Naive thymus-derived CD4-positive, alpha-beta T cell (primary cell): ENCODE measurements at regions of chr1 and their contacts with region 1.

Region 1: DNA sequence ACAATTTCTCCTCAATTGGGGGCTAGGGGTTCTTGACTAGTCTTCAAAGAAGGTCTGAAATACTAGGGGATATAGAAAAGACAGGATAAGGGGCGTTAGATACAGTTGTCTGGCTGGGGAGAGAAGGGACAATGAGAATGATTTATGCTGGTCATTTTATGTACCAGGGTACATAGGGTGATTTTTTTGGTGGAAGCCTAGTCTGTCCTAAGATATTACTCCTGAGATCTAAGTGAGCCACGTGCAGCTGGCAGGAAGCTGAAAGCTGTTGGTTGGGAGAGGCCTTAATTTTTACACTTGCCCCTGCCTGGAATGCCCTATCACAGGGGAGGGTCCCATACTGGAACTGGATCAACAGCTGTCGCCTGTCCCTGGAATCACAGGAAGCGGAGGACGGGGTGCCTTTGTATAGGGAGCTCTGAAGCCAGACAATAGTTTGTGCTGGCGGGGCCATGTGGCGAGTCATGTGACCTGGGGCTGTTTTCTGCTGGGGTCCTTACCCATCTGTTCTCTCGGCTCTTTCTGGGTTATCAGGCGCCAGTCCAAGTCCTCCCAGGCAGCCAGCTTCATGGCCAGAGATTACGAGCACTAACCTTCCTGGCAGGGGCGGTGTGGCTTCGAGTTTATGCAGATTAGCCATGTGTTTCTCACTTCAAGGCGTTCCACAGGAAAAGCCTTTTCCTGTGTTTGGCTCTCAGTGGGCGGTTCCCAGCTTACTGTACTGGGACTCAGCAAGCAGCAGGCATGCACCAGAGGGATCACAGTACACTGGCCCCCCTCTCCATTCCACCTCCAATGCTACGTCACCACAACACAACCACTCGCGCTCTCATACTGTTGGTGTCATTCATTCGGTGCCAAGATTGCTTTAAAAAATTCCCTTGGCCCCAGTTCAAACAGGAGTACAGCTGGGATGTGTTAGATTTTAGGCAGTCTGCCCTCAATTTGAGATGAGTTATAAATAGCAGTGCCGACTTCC is 27.5 kb downstream of the ARID1A start:
- DNase-seq: peak in 6 of 9 donors; percentile 18 to 77 (median 36)
- ATAC-seq: peak; percentile 80
- H3K4me3 ChIP-seq: peak overlapping the region; percentile 37
- H3K4me3 Mint-ChIP-seq: peak overlapping the region; percentile 64 to 89 (median 81)
- H3K27ac ChIP-seq: peak overlapping the region; percentile 58
- H3K27ac Mint-ChIP-seq: peak overlapping the region; percentile 8 to 92 (median 77)
- H3K4me1 ChIP-seq: peaks cover 77 to 81% of the 10 kb centered on the region in 2 donors
- H3K4me1 Mint-ChIP-seq: peaks cover 80 to 93% (median 89%) of the 10 kb centered on the region in 7 donors
- H3K27me3 ChIP-seq: no peaks in the 10 kb centered on the region
- H3K27me3 Mint-ChIP-seq: no peaks in the 10 kb centered on the region

Region 2: DNA sequence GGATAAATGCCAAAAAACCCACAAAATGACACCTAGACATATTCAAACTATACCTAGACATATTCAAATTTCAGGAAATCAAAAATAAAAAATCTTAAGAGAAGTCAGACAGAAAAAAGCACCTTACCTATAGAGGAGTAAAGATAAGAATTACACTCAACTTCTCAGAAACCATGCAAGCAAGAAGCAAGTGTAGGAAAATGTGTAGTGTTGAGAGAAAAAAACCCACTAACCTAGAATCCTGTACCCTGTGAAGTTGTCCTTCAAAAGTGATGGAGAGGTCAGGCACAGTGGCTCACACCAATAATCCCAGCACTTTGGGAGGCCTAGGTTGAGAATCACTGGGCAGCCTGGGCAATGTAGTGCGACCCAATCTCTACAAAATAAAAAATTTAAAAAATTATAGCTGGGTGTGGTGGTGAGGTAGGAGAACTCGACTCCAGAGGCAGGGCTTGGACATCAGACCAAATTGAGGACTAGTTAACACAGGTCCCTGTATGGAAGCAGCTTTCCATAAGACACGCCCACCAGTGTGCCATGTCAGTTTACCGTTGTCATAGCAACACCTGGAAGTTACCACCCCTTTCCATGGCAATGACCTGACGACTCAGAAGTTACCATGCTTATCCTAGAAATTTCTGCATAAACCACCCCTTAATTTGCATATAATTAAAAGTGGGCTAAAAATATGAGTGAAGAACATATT is 591.0 kb before region 1 on chr1:
- CTCF ChIA-PET with region 1: no interaction called
- POLR2A ChIA-PET with region 1: no interaction called
- intact Hi-C with region 1: no loop called
- DNase-seq: no peak
- ATAC-seq: no peak
- H3K4me3 ChIP-seq: no peak overlapping the region
- H3K4me3 Mint-ChIP-seq: no peak overlapping the region
- H3K27ac ChIP-seq: no peak overlapping the region
- H3K27ac Mint-ChIP-seq: no peak overlapping the region
- H3K4me1 ChIP-seq: peaks cover 3 to 9% of the 10 kb centered on the region in 2 donors
- H3K4me1 Mint-ChIP-seq: peaks cover 9 to 21% (median 16%) of the 10 kb centered on the region in 7 donors
- H3K27me3 ChIP-seq: no peaks in the 10 kb centered on the region
- H3K27me3 Mint-ChIP-seq: peaks cover 0 to 13% (median 0%) of the 10 kb centered on the region in 5 donors

Region 3: DNA sequence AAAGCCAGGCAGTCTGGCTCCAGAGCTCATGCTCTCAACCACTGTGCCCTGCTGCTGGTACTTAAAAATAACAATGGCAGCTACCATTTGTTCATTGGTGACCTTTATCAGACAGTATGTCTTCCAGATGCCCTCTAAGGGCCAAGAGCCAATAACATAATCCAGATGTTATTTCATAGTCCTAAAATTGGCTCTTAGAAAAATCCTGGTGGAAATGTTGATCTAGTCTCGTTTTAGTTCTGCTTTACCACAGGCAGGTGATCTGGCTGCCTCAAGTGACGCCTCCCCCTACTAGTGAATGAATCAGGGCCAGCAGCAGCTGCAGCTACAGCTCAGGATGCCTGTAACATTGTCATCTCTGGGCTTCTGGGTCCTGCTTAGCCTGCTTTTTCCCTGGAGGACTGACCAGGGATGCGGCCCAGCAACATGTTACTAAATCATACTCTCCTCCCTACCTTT is 263.7 kb before region 1 on chr1:
- CTCF ChIA-PET with region 1: no interaction called
- POLR2A ChIA-PET with region 1: no interaction called
- intact Hi-C with region 1: no loop called
- DNase-seq: no peak
- ATAC-seq: no peak
- H3K4me3 ChIP-seq: no peak overlapping the region
- H3K4me3 Mint-ChIP-seq: no peak overlapping the region
- H3K27ac ChIP-seq: no peak overlapping the region
- H3K27ac Mint-ChIP-seq: no peak overlapping the region
- H3K4me1 ChIP-seq: no peaks in the 10 kb centered on the region
- H3K4me1 Mint-ChIP-seq: peaks cover 0 to 7% (median 0%) of the 10 kb centered on the region in 7 donors
- H3K27me3 ChIP-seq: no peaks in the 10 kb centered on the region
- H3K27me3 Mint-ChIP-seq: no peaks in the 10 kb centered on the region

Region 4: GRCh38 chr1:26705788-26706311 is 17.5 kb before region 1 on chr1:
- CTCF ChIA-PET with region 1: interaction called, 7 read pairs
- POLR2A ChIA-PET with region 1: interaction called, 13 read pairs
- intact Hi-C with region 1: loop called in 1 of 2 experiments (anchors 1 kb)
- DNase-seq: no peak
- ATAC-seq: peak; percentile 31
- H3K4me3 ChIP-seq: no peak overlapping the region
- H3K4me3 Mint-ChIP-seq: peak overlapping the region in 9 of 10 donors; percentile 26 to 80 (median 74)
- H3K27ac ChIP-seq: peak overlapping the region; percentile 20
- H3K27ac Mint-ChIP-seq: peak overlapping the region in 8 of 9 donors; percentile 21 to 77 (median 68)
- H3K4me1 ChIP-seq: peaks cover 59 to 61% of the 10 kb centered on the region in 2 donors
- H3K4me1 Mint-ChIP-seq: peaks cover 19 to 47% (median 30%) of the 10 kb centered on the region in 7 donors
- H3K27me3 ChIP-seq: no peaks in the 10 kb centered on the region
- H3K27me3 Mint-ChIP-seq: no peaks in the 10 kb centered on the region